Activated T-helper 2 cell treated with anti-CD3 and anti-CD28 coated beads, Interferon-gamma antibody, Interleukin-2, Interleukin-4, amounts not matched to agents 10 μg/mL and 5 μg/mL and 100 μg/mL, durations not matched to agents 14 hours and 24 hours and 36 hours (primary cell): ENCODE measurements at regions of chr11 and their contacts with region 1.

Region 1: DNA sequence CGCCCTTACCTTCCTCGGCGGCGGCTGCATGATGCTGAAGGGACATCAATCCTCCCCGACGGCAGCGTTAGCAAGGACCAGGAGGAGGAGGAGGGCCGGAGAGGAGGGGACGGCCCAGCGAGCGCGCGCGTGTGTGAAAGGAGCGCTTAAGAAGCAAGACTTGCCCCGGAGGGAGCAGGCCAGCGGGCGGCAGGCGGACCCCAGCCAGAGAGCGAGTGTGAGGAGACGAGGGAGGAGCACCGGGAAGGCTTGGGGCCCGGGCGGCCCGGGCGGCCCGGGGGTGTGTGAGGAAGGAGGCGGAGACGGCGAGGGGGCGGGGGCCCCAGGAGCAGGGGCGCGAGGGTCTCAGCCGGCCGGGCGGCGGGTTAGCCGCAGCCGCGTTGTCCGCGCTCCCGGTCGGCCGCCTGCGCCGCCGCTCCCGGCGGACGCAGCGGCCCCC is 251 bp downstream of the FCHSD2 start:
- DNase-seq: no peak
- H3K4me3 Mint-ChIP-seq: peak overlapping the region; percentile 99
- H3K27ac Mint-ChIP-seq: peak overlapping the region; percentile 96
- H3K4me1 Mint-ChIP-seq: peaks cover 33% of the 10 kb centered on the region
- H3K27me3 Mint-ChIP-seq: no peaks in the 10 kb centered on the region

Region 2: DNA sequence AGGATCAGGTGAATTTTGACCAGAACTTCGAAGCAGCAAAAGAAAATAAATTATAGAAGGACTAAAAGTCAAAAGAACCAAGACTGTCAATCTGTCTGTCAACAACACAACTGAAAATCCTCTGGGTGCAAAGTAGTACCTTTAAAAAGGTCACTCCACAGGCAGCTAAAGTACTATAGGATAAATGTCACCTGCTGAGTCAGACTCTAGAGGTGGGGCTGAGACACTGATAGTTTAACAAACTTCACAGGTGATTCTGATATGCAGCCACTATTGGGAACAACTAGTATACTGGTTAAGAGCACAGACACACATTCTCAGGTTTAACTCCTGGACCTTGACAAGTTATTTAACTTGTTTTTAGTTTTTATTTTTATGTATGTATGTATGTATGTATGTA is 107.1 kb before region 1 on chr11:
- intact Hi-C with region 1: loop called (anchors 1 kb)
- DNase-seq: no peak
- H3K4me3 Mint-ChIP-seq: no peak overlapping the region
- H3K27ac Mint-ChIP-seq: peak overlapping the region; percentile 65
- H3K4me1 Mint-ChIP-seq: peaks cover 17% of the 10 kb centered on the region
- H3K27me3 Mint-ChIP-seq: no peaks in the 10 kb centered on the region